Right lobe of liver (tissue), 6 donors: ENCODE measurements at regions of chr7 and their contacts with region 1.

Region 1: GRCh38 chr7:86939197-86939814 is 120.1 kb downstream of the ELAPOR2 start:
- DNase-seq: peak in 1 of 3 donors; percentile 47
- ATAC-seq: peak; percentile 86 to 93 (median 88)
- H3K4me3 ChIP-seq: no peak overlapping the region
- H3K27ac ChIP-seq: no peak overlapping the region
- H3K4me1 ChIP-seq: no peaks in the 10 kb centered on the region
- H3K27me3 ChIP-seq: no peaks in the 10 kb centered on the region
- CTCF ChIP-seq: peak; percentile 62 to 80 (median 68)
- POLR2A ChIP-seq: no peak

Region 2: DNA sequence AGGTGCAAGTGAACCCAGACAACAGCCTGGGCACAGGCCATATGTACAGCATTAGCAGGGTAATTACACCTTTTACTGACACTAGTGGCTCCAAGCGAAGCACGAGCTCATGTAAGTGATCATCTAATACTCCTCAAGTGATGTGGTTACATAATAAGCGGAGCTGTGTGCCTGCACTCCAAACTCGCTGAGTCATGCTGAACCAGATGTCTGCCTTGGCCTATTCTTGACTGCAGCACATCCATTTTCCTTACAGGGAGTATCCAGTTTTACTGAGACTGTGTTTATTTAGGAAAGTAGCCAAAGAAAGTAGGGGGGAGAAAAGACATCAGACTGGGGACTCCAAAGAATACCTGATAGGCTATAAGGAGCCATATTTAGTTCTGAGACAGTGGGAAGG is 205.5 kb before region 1 on chr7:
- intact Hi-C with region 1: no loop called
- DNase-seq: no peak
- ATAC-seq: no peak
- H3K4me3 ChIP-seq: no peak overlapping the region
- H3K27ac ChIP-seq: no peak overlapping the region
- H3K4me1 ChIP-seq: no peaks in the 10 kb centered on the region
- H3K27me3 ChIP-seq: no peaks in the 10 kb centered on the region
- CTCF ChIP-seq: no peak
- POLR2A ChIP-seq: no peak

Region 3: DNA sequence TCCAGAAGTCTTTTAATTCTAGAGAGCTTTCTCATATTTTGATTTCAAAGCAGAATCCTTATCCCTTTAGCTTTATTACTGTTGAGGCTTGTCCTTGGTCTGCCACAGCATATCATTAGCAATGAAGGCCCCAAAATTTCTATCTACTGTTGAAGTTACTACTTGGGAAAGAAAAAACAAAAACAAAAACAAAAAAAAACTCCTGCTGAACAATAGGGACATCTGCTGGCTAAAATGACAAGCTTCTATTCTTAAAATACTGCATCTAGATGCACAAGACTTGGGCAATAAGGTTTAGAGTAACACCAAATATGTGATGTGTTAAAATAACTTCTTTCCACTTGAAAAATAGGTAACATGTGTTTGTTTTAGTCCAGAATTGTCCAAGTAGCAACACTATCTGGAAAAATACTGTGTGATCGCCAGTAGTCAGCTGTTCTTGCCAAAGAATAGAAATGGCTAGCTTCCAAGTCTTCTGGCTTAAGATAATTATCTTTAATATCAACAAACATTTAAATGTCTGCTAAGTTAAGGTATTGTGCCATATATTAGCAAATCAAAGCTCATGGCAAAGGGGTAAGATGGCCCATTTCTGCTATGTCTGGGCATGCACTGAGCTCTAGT is 209.1 kb after region 1 on chr7:
- intact Hi-C with region 1: loop called in 1 of 2 experiments (anchors 10 kb)
- DNase-seq: no peak
- ATAC-seq: no peak
- H3K4me3 ChIP-seq: no peak overlapping the region
- H3K27ac ChIP-seq: no peak overlapping the region
- H3K4me1 ChIP-seq: peaks cover 0 to 8% (median 0%) of the 10 kb centered on the region in 4 donors
- H3K27me3 ChIP-seq: no peaks in the 10 kb centered on the region
- CTCF ChIP-seq: peak; percentile 36 to 56 (median 54)
- POLR2A ChIP-seq: no peak